CD14-positive monocyte (primary cell): ENCODE measurements at regions of chr2 and their contacts with region 1.

Region 1: DNA sequence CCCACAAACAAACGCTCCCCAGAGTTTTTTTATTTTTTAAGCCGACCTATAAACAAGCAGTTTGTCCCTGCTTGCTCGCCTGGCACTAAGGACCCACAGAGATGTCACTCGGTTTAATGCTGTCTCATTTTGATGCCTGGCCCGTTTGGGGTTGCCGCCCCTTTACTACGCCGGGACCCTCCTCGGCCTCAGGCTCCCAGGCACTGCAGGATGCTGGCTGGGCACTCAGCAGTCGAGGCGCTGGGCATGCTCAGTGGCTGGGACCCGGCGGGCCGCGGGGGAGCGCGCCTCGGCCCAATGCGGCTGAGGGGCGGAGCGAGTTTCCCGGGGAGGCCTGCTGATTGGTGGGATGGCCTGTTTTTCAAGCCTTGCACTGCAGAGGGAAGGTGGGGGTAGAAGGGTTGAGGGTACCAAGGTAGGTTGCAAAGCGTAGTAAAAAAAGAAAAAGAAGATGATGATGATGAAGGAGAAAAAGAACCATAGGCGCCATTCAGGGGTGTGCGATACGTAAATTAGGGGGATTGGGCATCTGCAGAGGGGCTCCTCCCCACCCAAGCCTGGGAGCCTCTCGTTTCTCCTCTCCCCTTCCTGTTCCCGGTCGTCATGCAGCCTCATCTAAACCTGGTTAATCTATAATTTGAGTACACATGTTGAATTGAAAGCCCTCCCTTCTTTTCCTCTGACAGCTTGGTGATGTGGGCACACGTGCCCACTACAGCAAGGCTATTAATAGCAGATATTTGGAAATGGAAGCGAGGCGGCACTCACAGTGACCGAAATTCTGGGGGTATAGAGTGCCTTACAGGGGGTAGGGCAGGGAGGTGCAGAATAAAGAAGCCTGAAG is 1.5 kb upstream of the IRS1 start:
- DNase-seq: peak in 1 of 3 donors; percentile 17
- H3K4me3 ChIP-seq: peak overlapping the region in 2 of 3 experiments; percentile 11 to 87
- H3K4me3 Mint-ChIP-seq: peak overlapping the region; percentile 80 to 92
- H3K27ac ChIP-seq: no peak overlapping the region
- H3K27ac Mint-ChIP-seq: peak overlapping the region in 1 of 7 donors; percentile 56
- H3K4me1 ChIP-seq: peaks cover 31 to 44% of the 10 kb centered on the region in 2 donors
- H3K4me1 Mint-ChIP-seq: peaks cover 27% of the 10 kb centered on the region
- H3K27me3 ChIP-seq: peaks cover 29 to 73% of the 10 kb centered on the region in 2 donors
- H3K27me3 Mint-ChIP-seq: peaks cover 53 to 86% (median 58%) of the 10 kb centered on the region in 3 donors
- CTCF ChIP-seq: no peak

Region 2: GRCh38 chr2:225660262-225661131 is 1140.7 kb before region 1 on chr2:
- intact Hi-C with region 1: loop called (anchors 5 to 10 kb)
- DNase-seq: peak; percentile 29 to 49 (median 45)
- H3K4me3 ChIP-seq: no peak overlapping the region
- H3K4me3 Mint-ChIP-seq: no peak overlapping the region
- H3K27ac ChIP-seq: no peak overlapping the region
- H3K27ac Mint-ChIP-seq: no peak overlapping the region
- H3K4me1 ChIP-seq: no peaks in the 10 kb centered on the region
- H3K4me1 Mint-ChIP-seq: no peaks in the 10 kb centered on the region
- H3K27me3 ChIP-seq: no peaks in the 10 kb centered on the region
- H3K27me3 Mint-ChIP-seq: peaks cover 4 to 9% (median 6%) of the 10 kb centered on the region in 3 donors
- CTCF ChIP-seq: peak; percentile 91

Region 3: DNA sequence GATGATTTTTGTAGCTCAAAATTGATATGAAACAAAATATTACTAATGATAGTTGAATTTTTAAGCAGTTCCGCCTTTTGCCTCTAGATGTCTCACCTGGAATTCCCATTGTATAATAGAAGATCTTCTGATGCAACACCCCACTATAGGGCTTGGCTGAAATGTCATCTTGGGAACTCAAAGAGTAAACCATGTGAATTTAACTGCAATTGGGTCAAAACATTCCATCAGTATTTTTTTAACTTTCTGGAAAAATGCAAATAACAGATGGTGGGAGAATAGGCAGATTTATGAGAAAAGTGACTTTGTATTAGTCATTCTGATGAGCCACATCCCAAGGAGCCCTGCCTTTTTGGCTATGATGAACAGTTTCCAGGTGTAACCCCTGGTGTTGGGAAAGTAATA is 911.7 kb before region 1 on chr2:
- intact Hi-C with region 1: loop called in 1 of 2 experiments (anchors 10 kb)
- DNase-seq: peak; percentile 16 to 57 (median 34)
- H3K4me3 ChIP-seq: no peak overlapping the region
- H3K4me3 Mint-ChIP-seq: no peak overlapping the region
- H3K27ac ChIP-seq: no peak overlapping the region
- H3K27ac Mint-ChIP-seq: no peak overlapping the region
- H3K4me1 ChIP-seq: peaks cover 4 to 5% of the 10 kb centered on the region in 2 donors
- H3K4me1 Mint-ChIP-seq: peaks cover 1% of the 10 kb centered on the region
- H3K27me3 ChIP-seq: no peaks in the 10 kb centered on the region
- H3K27me3 Mint-ChIP-seq: peaks cover 3 to 10% (median 3%) of the 10 kb centered on the region in 3 donors
- CTCF ChIP-seq: peak; percentile 67

Region 4: GRCh38 chr2:226215902-226216503 is 585.2 kb before region 1 on chr2:
- intact Hi-C with region 1: loop called in 1 of 2 experiments (anchors 10 kb)
- DNase-seq: peak; percentile 27 to 46 (median 28)
- H3K4me3 ChIP-seq: no peak overlapping the region
- H3K4me3 Mint-ChIP-seq: no peak overlapping the region
- H3K27ac ChIP-seq: no peak overlapping the region
- H3K27ac Mint-ChIP-seq: no peak overlapping the region
- H3K4me1 ChIP-seq: peaks cover 5 to 12% of the 10 kb centered on the region in 2 donors
- H3K4me1 Mint-ChIP-seq: peaks cover 16% of the 10 kb centered on the region
- H3K27me3 ChIP-seq: no peaks in the 10 kb centered on the region
- H3K27me3 Mint-ChIP-seq: peaks cover 0 to 1% (median 1%) of the 10 kb centered on the region in 3 donors
- CTCF ChIP-seq: peak; percentile 78